WTC11 (cell line): ENCODE measurements at regions of chr13 and their contacts with region 1.

Region 1: DNA sequence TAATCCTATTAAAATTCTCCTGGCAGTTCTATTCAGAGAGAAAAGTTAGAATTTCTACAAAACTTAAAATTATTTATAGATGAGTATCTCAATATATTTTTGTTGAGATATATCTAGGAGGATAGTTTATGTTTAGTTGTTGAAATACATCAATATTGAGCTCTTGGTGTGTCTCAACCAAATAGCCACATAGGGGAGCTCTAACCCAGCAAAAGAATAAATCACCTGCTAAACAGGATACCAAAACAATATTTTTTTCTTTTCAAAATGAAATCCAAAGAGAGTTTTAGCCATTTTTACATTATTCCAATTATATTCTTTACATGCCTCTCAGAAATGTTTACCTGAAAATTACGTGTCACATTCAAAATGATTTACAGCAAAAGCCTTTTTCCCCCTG is 954.7 kb downstream of the SLITRK6 start:
- DNase-seq: no peak
- ATAC-seq: peak; percentile 43; the same call in 1 of the 2 replicates
- H3K4me3 Mint-ChIP-seq: no peak overlapping the region
- H3K27ac Mint-ChIP-seq: no peak overlapping the region
- H3K4me1 Mint-ChIP-seq: no peaks in the 10 kb centered on the region
- H3K27me3 Mint-ChIP-seq: no peaks in the 10 kb centered on the region
- CTCF ChIP-seq: 0 out of 2 replicates have a peak, but pooled peaks have one; percentile 27

Region 2: DNA sequence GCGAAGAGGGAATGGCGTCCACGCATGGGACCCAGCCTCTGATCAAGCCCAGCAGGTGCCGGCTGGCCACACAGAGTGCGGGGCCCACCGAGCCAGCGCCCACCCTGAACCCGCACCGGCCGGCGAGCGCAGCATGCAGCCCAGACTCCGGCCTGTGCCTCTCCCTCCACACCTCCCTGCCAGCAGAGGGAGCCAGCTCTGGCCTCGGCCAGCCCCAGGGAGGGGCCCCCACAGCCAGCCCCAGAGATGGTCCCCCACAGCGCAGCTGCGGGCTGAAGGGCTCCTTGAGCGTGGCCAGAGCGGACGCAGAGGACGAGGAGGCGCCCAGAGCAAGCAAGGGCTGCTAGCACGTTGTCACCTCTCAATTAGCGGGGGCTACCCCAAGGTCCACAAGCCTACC is 50.3 kb after region 1 on chr13:
- CTCF ChIA-PET with region 1: interaction called, 11 read pairs
- POLR2A ChIA-PET with region 1: no interaction called
- DNase-seq: peak; percentile 39
- ATAC-seq: peak; percentile 89
- H3K4me3 Mint-ChIP-seq: no peak overlapping the region
- H3K27ac Mint-ChIP-seq: no peak overlapping the region
- H3K4me1 Mint-ChIP-seq: no peaks in the 10 kb centered on the region
- H3K27me3 Mint-ChIP-seq: no peaks in the 10 kb centered on the region
- CTCF ChIP-seq: no peak

Region 3: DNA sequence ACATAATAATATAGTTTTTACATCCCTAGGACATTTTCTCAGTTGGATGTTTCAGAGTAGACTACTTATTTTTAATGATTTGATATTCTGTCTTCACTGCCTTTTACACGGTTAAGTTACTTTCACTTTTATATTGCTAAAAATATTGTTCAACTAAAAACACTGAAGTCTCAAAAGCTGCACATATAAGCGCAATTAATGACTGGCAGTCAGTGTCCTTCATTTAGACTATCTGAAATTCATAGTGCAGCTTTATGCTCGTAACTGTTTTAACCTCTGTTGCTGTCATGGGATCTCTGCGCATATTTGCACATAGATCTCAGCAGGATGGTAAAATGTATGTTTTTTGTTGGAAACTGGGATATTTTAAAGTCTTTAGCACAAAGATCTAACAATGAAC is 90.4 kb after region 1 on chr13:
- CTCF ChIA-PET with region 1: no interaction called
- POLR2A ChIA-PET with region 1: no interaction called
- DNase-seq: no peak
- ATAC-seq: no peak
- H3K4me3 Mint-ChIP-seq: no peak overlapping the region
- H3K27ac Mint-ChIP-seq: no peak overlapping the region
- H3K4me1 Mint-ChIP-seq: no peaks in the 10 kb centered on the region
- H3K27me3 Mint-ChIP-seq: no peaks in the 10 kb centered on the region
- CTCF ChIP-seq: no peak

Region 4: DNA sequence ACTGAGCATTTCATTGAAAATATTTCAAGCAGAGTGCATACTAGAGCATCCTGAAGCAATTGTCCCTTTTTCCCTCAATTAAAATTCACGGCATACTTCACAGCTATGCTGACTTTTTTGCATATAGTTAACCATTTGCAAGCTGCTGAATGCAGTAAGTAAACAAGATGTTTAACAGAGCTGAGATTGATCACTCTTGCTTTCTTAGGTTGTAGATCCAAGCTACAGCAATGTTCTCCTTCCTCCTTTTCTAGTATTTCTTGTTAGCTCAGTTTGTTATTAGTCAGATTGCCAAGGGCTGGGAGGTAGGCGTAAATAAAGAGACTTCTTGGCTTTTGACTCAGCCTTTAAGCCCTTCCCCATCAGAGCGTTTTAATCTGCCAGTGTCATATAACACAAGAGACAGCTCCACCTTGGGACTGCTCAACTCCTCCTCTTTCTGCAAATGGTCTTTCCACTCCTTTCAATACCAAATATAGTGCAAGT is 954.7 kb after region 1 on chr13 and contains the start of gene SLITRK6:
- CTCF ChIA-PET with region 1: interaction called, 10 read pairs
- POLR2A ChIA-PET with region 1: no interaction called
- DNase-seq: no peak
- ATAC-seq: peak; percentile 99
- H3K4me3 Mint-ChIP-seq: peak within 1 kb of the TSS; percentile 9; the same call in 1 of the 2 replicates
- H3K27ac Mint-ChIP-seq: peak within 1 kb of the TSS; percentile 72
- H3K4me1 Mint-ChIP-seq: peaks cover 26% of the 10 kb centered on the region
- H3K27me3 Mint-ChIP-seq: no peaks in the 10 kb centered on the region
- CTCF ChIP-seq: no peak
- total RNA-seq, gene SLITRK6: 0.04 to 0.41 TPM (median 0.07 TPM) in 3 replicates